IMR-90 (cell line): ENCODE measurements at regions of chr21 and their contacts with region 1.

Region 1: DNA sequence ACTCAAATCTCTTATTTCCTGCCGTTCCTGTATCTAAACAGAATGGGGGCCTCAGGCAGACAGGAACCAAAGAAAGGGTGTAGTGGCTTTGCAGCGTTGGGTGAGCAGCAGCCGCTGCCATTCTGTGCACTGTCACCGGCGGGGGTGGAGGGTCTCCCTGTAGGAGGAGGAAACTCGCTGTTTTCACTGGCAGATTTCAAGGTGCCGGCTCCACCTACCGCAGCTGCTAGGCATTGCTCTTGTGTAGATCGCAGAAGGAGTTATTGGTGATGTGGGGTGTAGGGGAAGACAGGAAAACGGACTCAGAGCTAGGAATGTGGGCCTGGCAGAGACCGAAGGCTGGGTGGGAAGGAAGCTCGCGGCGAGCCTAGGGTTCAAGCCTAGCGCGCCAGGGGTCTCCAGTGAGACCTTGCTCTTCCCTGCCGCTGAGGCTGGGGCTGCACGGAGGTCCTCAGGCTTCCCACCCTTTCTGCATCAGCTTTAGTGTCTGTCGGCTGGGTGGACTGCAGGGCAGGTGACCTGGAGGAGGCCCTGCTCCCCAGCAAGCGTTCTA is 20.8 kb downstream of the ATP5PO start:
- DNase-seq: peak; percentile 89
- ATAC-seq: peak; percentile 92
- H3K4me3 ChIP-seq: peak overlapping the region; percentile 22; the same call in 1 of the 2 replicates
- H3K27ac ChIP-seq: no peak overlapping the region
- H3K4me1 ChIP-seq: peaks cover 17% of the 10 kb centered on the region
- H3K27me3 ChIP-seq: no peaks in the 10 kb centered on the region
- CTCF ChIP-seq: peak; percentile 87
- POLR2A ChIP-seq: no peak
- RAD21 ChIP-seq: peak; percentile 90

Region 2: DNA sequence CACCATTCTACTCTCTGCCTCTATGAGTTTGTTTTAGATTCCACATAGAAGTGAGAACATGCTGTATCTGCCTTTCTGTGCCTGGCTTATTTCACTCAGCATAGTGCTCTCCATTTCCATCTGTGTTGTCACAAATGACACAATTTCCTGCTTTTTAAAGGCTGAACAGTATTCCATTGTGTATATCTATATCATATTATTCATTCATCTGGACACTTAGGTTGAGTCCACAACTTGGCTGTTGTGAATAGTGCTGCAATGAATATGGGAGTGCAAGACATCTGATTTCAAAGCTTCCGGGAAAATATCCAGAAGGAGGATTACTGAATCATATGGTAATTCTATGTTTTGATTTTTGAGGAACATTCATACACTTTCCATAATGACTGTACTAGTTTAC is 286.3 kb before region 1 on chr21:
- CTCF ChIA-PET with region 1: interaction called, 16 read pairs
- POLR2A ChIA-PET with region 1: no interaction called
- dilution Hi-C with region 1: no loop called
- in situ Hi-C with region 1: no loop called
- intact Hi-C with region 1: loop called (anchors 2 kb)
- DNase-seq: peak; percentile 65
- ATAC-seq: peak; percentile 70
- H3K4me3 ChIP-seq: no peak overlapping the region
- H3K27ac ChIP-seq: no peak overlapping the region; the same call in 1 of the 2 replicates
- H3K4me1 ChIP-seq: no peaks in the 10 kb centered on the region
- H3K27me3 ChIP-seq: no peaks in the 10 kb centered on the region
- CTCF ChIP-seq: no peak
- POLR2A ChIP-seq: no peak
- RAD21 ChIP-seq: no peak

Region 3: GRCh38 chr21:33703750-33704606 is 190.8 kb before region 1 on chr21:
- CTCF ChIA-PET with region 1: no interaction called
- POLR2A ChIA-PET with region 1: no interaction called
- dilution Hi-C with region 1: no loop called
- in situ Hi-C with region 1: no loop called
- intact Hi-C with region 1: no loop called
- DNase-seq: peak; percentile 11
- ATAC-seq: peak; percentile 32; the same call in 1 of the 2 replicates
- H3K4me3 ChIP-seq: no peak overlapping the region
- H3K27ac ChIP-seq: peak overlapping the region; percentile 42; the same call in 1 of the 2 replicates
- H3K4me1 ChIP-seq: peaks cover 9% of the 10 kb centered on the region
- H3K27me3 ChIP-seq: no peaks in the 10 kb centered on the region
- CTCF ChIP-seq: no peak
- POLR2A ChIP-seq: no peak
- RAD21 ChIP-seq: no peak

Region 4: DNA sequence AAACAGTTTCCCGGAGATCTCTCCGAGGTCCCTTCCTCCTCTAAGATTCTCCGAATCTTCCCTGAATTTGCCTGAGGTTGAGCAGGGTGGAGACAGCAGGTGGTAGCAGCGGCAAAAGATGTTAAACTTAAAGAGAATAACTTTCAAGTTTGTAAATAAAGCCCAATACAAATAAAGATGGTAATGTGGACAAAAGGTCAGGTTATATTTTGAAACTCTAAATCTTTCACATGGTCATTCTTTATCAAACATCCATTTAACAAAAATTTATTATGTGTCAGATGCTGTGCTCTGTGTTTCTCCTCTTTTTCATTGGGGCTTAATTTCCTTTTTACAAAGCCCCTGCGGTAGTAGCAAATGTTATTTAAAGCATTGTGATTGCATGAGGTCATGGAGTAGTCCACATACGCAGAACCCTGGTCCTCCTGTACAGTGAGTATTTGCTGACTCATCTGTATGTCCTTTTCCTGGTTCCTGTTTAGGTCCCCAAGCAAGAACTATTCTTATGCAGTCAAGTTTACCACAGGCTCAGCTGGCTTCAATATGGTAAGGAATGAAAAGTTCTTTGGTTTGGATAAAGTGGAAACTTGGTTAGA is 133.3 kb before region 1 on chr21:
- CTCF ChIA-PET with region 1: interaction called, 3 read pairs
- POLR2A ChIA-PET with region 1: no interaction called
- dilution Hi-C with region 1: no loop called
- in situ Hi-C with region 1: no loop called
- intact Hi-C with region 1: loop called (anchors 5 kb)
- DNase-seq: peak; percentile 99
- ATAC-seq: peak; percentile 86
- H3K4me3 ChIP-seq: peak overlapping the region; percentile 3; the same call in 1 of the 2 replicates
- H3K27ac ChIP-seq: peak overlapping the region; percentile 78
- H3K4me1 ChIP-seq: peaks cover 9% of the 10 kb centered on the region
- H3K27me3 ChIP-seq: no peaks in the 10 kb centered on the region
- CTCF ChIP-seq: no peak
- POLR2A ChIP-seq: no peak
- RAD21 ChIP-seq: no peak

Region 5: GRCh38 chr21:33825915-33826314 is 68.9 kb before region 1 on chr21:
- CTCF ChIA-PET with region 1: no interaction called
- POLR2A ChIA-PET with region 1: no interaction called
- dilution Hi-C with region 1: no loop called
- in situ Hi-C with region 1: no loop called
- intact Hi-C with region 1: loop called (anchors 5 kb)
- DNase-seq: peak; percentile 65
- ATAC-seq: peak; percentile 95
- H3K4me3 ChIP-seq: no peak overlapping the region
- H3K27ac ChIP-seq: peak overlapping the region; percentile 46; the same call in 1 of the 2 replicates
- H3K4me1 ChIP-seq: peaks cover 12% of the 10 kb centered on the region
- H3K27me3 ChIP-seq: no peaks in the 10 kb centered on the region
- CTCF ChIP-seq: no peak
- POLR2A ChIP-seq: no peak
- RAD21 ChIP-seq: no peak

Region 6: GRCh38 chr21:33866826-33867225 is 28.0 kb before region 1 on chr21:
- CTCF ChIA-PET with region 1: no interaction called
- POLR2A ChIA-PET with region 1: no interaction called
- dilution Hi-C with region 1: no loop called
- in situ Hi-C with region 1: no loop called
- intact Hi-C with region 1: no loop called
- DNase-seq: peak; percentile 60
- ATAC-seq: peak; percentile 87
- H3K4me3 ChIP-seq: no peak overlapping the region
- H3K27ac ChIP-seq: no peak overlapping the region
- H3K4me1 ChIP-seq: peaks cover 2% of the 10 kb centered on the region; the same call in 1 of the 2 replicates
- H3K27me3 ChIP-seq: peaks cover 7% of the 10 kb centered on the region
- CTCF ChIP-seq: no peak
- POLR2A ChIP-seq: no peak
- RAD21 ChIP-seq: no peak